ENCODE measurements at regions of chr1 and their contacts with region 1.

Region 1: DNA sequence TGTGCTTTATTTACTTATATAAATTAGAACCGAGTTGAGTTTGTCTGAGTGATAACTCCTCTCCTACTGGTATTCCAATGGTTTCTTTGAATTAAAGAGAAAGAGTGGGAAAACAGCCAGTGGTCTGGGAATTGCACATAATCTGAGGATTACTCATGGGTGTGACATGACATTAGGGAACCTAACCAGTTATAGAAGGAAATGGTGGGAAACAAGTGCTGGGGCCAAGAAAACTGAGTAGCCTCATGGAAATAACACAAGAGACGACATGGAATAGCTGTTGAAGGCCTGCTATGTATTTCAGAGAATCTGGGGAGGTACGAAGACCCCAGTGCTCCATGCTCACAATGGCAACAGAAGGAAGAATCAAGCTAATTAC is 41.8 kb upstream of the LRRC52 start:
- DNase-seq: no peak
- ATAC-seq: peak; percentile 32 to 81 (median 70)
- H3K4me3 ChIP-seq: no peak overlapping the region
- H3K27ac ChIP-seq: peak overlapping the region; percentile 78
- H3K4me1 ChIP-seq: no peaks in the 10 kb centered on the region
- H3K27me3 ChIP-seq: no peaks in the 10 kb centered on the region
- CTCF ChIP-seq: no peak

Region 2: GRCh38 chr1:164858101-164858632 is 643.8 kb before region 1 on chr1:
- intact Hi-C with region 1: no loop called
- DNase-seq: no peak
- ATAC-seq: no peak
- H3K4me3 ChIP-seq: no peak overlapping the region
- H3K27ac ChIP-seq: no peak overlapping the region
- H3K4me1 ChIP-seq: no peaks in the 10 kb centered on the region
- H3K27me3 ChIP-seq: no peaks in the 10 kb centered on the region
- CTCF ChIP-seq: no peak

Region 3: GRCh38 chr1:165411396-165411795 is 90.6 kb before region 1 on chr1:
- intact Hi-C with region 1: no loop called
- DNase-seq: no peak
- ATAC-seq: no peak
- H3K4me3 ChIP-seq: no peak overlapping the region
- H3K27ac ChIP-seq: no peak overlapping the region
- H3K4me1 ChIP-seq: peaks cover 9% of the 10 kb centered on the region
- H3K27me3 ChIP-seq: no peaks in the 10 kb centered on the region
- CTCF ChIP-seq: no peak

Region 4: DNA sequence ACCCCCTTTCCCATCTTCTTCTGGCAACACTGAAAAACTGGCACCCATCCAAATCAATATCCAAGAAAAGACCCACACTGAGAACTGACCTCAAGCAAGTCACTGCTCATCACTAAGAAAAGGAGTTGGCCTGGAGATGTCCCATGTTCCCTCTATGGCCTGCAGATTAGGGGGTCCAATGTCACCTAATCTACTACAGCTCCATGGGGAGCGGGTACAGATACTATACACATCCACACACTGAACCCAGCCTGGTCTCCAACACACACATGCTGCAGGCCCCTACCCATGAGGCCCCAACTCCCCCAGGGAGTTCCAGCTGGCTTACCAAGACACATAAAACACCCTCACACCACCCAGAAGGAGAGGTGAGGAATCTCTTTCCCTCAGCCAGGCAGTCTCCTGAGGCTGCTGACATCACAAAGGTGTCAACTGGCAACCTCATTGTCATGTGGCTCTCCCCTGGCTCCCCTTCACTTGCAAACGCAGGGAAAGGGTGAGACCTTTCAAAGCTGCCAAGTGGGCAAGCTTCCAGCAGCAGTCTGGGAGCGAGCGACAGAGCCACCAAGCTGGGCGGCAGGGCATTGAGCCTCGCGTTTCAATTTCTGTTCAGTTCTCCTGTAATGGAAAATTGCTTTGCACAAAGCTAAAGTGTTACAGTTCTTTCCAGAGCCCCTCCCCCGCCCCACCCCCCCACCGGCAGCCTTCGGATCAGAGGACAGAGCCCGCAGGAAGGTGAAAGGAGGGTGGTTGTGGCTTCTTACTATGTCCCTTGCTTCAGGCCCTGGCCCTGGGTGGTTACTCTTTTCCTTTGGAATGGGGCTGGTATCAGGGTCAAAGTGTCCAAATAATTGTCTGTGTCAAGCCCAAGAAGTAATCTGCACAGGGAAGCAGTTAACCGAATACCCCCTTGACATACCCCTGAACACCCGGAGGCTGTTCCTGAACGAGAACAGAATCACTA is 41.9 kb after region 1 on chr1 and contains the start of gene LRRC52:
- intact Hi-C with region 1: loop called (anchors 5 kb)
- DNase-seq: peak; percentile 61 to 87
- ATAC-seq: peak; percentile 60 to 76 (median 72)
- H3K4me3 ChIP-seq: no peak within 1 kb of the TSS
- H3K27ac ChIP-seq: peak within 1 kb of the TSS; percentile 48
- H3K4me1 ChIP-seq: peaks cover 32% of the 10 kb centered on the region
- H3K27me3 ChIP-seq: no peaks in the 10 kb centered on the region
- CTCF ChIP-seq: peak; percentile 9
- total RNA-seq, gene LRRC52: not detected